Caco-2 (cell line): ENCODE measurements at regions of chr1 and their contacts with region 1.

Region 1: DNA sequence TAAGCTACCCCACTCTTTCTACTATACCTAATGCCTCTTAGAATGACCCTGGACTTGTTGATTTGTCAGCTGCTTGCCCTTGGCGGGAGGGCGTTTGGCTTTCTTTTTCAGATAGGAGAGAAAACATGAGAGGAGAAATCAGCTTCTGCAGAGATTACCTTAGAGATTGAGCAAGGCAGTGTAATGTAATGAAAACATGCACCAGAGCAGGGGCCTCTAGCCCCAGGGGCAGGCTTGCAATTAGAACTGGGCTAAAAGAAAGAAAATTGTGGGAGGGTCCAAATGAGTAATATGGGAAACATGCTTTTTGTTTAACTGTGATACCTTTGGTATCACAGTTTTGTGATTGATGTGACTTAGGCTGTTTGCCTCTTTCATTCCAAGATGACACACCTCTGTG is 89.7 kb downstream of the PBX1 start:
- DNase-seq: peak; percentile 83 to 85
- H3K4me3 ChIP-seq: no peak overlapping the region
- H3K4me3 Mint-ChIP-seq: peak overlapping the region; percentile 44
- H3K27ac Mint-ChIP-seq: peak overlapping the region; percentile 80
- H3K4me1 ChIP-seq: peaks cover 59% of the 10 kb centered on the region
- H3K4me1 Mint-ChIP-seq: peaks cover 59% of the 10 kb centered on the region
- H3K27me3 ChIP-seq: no peaks in the 10 kb centered on the region
- H3K27me3 Mint-ChIP-seq: no peaks in the 10 kb centered on the region
- CTCF ChIP-seq: no peak

Region 2: GRCh38 chr1:164673584-164674214 is 25.1 kb after region 1 on chr1:
- CTCF ChIA-PET with region 1: no interaction called
- POLR2A ChIA-PET with region 1: no interaction called
- intact Hi-C with region 1: loop called (anchors 2 kb)
- DNase-seq: peak in 1 of 2 experiments; percentile 42
- H3K4me3 ChIP-seq: no peak overlapping the region
- H3K4me3 Mint-ChIP-seq: no peak overlapping the region
- H3K27ac Mint-ChIP-seq: no peak overlapping the region
- H3K4me1 ChIP-seq: peaks cover 57% of the 10 kb centered on the region
- H3K4me1 Mint-ChIP-seq: peaks cover 44% of the 10 kb centered on the region
- H3K27me3 ChIP-seq: no peaks in the 10 kb centered on the region
- H3K27me3 Mint-ChIP-seq: no peaks in the 10 kb centered on the region
- CTCF ChIP-seq: peak; percentile 42 to 78

Region 3: DNA sequence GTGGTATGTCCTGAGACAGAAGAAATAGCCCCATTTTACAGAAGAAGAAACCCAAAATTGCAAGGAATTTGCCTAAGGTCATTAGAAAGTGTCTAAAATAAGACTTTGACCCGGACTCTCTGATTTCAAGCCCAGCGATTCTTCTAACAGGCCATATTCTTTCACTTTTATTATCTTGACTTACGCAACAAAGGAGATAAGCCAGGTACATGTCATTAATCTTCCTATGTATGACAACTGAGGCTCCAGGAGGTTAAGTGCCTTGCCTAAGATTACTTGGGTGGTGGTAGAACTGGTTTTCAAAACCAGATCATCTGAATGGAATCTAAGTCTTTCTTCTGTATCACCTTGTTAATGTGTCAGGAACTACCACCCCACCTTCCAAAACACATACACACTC is 34.6 kb after region 1 on chr1:
- CTCF ChIA-PET with region 1: no interaction called
- POLR2A ChIA-PET with region 1: no interaction called
- intact Hi-C with region 1: loop called (anchors 2 kb)
- DNase-seq: peak; percentile 78 to 85
- H3K4me3 ChIP-seq: no peak overlapping the region
- H3K4me3 Mint-ChIP-seq: peak overlapping the region; percentile 67
- H3K27ac Mint-ChIP-seq: peak overlapping the region; percentile 89
- H3K4me1 ChIP-seq: peaks cover 61% of the 10 kb centered on the region
- H3K4me1 Mint-ChIP-seq: peaks cover 42% of the 10 kb centered on the region
- H3K27me3 ChIP-seq: no peaks in the 10 kb centered on the region
- H3K27me3 Mint-ChIP-seq: no peaks in the 10 kb centered on the region
- CTCF ChIP-seq: no peak

Region 4: DNA sequence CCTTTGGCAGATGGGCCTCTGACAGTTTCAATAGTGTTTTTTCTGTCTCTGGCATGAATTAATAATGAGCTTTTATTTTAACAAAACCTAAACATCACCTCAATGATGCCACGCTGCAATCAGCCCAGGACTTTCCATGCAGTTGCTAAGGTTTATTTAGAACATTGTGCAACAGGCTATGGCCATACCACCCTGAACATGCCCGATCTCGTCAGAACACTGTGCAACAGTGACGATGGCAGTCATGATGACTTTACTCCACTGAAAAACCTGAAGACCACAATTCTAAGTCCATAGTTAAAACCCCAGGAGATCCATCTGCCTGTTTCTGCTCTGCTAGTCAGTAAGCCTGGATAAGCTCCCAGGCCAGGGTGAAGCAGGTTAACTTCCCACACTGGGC is 220.4 kb after region 1 on chr1:
- CTCF ChIA-PET with region 1: no interaction called
- POLR2A ChIA-PET with region 1: no interaction called
- intact Hi-C with region 1: no loop called
- DNase-seq: no peak
- H3K4me3 ChIP-seq: no peak overlapping the region
- H3K4me3 Mint-ChIP-seq: no peak overlapping the region
- H3K27ac Mint-ChIP-seq: no peak overlapping the region
- H3K4me1 ChIP-seq: no peaks in the 10 kb centered on the region
- H3K4me1 Mint-ChIP-seq: no peaks in the 10 kb centered on the region
- H3K27me3 ChIP-seq: no peaks in the 10 kb centered on the region
- H3K27me3 Mint-ChIP-seq: no peaks in the 10 kb centered on the region
- CTCF ChIP-seq: no peak